Ascending aorta (tissue), 2 donors: ENCODE measurements at regions of chr2 and their contacts with region 1.

Region 1: GRCh38 chr2:159195697-159196096 is 90.8 kb downstream of the WDSUB1 start:
- DNase-seq: no peak
- H3K4me3 ChIP-seq: no peak overlapping the region
- H3K27ac ChIP-seq: no peak overlapping the region
- H3K4me1 ChIP-seq: peaks cover 0 to 9% of the 10 kb centered on the region in 2 donors
- H3K27me3 ChIP-seq: no peaks in the 10 kb centered on the region
- CTCF ChIP-seq: no peak

Region 2: DNA sequence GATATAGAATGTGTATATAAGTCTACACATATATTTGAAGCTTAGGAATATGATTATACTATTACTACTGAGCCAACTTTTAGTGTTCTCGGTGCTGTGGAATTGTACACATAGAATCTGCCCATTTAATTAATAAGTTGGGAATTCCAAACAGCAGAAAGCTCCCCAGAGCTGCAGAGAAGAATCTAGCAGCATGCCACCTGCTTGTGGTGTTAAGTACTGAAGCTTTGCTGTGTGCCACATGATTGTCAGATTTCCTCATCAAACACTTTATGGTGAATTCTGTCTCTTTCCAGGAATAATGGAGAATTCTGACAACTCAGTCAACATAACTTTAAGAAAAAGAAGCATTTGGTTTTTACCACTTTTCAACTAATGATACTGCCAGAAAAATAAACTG is 27.0 kb before region 1 on chr2:
- intact Hi-C with region 1: loop called (anchors 2 kb)
- DNase-seq: no peak
- H3K4me3 ChIP-seq: no peak overlapping the region
- H3K27ac ChIP-seq: peak overlapping the region in 1 of 2 donors; percentile 13
- H3K4me1 ChIP-seq: peaks cover 0 to 3% of the 10 kb centered on the region in 2 donors
- H3K27me3 ChIP-seq: no peaks in the 10 kb centered on the region
- CTCF ChIP-seq: peak in 2 of 3 experiments; percentile 29 to 39

Region 3: GRCh38 chr2:159362816-159363251 is 167.1 kb after region 1 on chr2:
- intact Hi-C with region 1: no loop called
- DNase-seq: no peak
- H3K4me3 ChIP-seq: no peak overlapping the region
- H3K27ac ChIP-seq: no peak overlapping the region
- H3K4me1 ChIP-seq: no peaks in the 10 kb centered on the region
- H3K27me3 ChIP-seq: no peaks in the 10 kb centered on the region
- CTCF ChIP-seq: no peak